AG04450 (cell line): ENCODE measurements at regions of chr1 and their contacts with region 1.

Region 1: GRCh38 chr1:207828485-207829158 is 76.8 kb downstream of the CD46 start:
- DNase-seq: peak; percentile 64
- H3K4me3 ChIP-seq: no peak overlapping the region
- H3K27ac ChIP-seq: no peak overlapping the region
- H3K27me3 ChIP-seq: no peaks in the 10 kb centered on the region
- CTCF ChIP-seq: peak; percentile 84

Region 2: DNA sequence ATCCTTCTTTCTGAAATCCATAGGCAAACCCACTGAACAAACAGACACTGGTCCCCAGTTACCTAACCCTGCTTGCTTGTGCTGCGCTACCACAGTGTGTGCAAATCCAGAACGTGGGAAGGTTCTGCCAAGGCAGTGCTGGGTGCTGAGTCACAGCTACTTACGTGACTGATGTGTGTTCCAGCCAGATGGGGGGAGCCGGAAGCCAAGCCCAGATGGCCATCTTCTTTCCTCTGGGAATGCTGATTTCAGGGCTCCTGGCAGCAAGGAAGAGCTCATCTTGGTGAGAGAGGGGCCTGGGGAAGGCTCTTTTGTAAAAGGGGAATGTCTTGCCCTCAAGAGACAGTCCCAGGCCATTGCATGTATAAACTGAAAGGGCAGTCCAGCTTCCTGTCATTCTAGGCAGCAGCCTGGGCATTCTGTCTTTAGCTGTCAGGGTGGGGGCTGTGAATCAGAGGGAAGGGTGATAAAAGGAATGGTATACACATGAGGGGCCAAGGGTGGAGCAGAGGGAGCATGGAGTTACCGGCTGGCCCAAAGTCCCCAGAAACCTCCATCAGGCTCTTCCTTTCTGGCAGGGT is 22.7 kb before region 1 on chr1:
- CTCF ChIA-PET with region 1: interaction called, 26 read pairs
- POLR2A ChIA-PET with region 1: interaction called, 5 read pairs
- DNase-seq: peak; percentile 85
- H3K4me3 ChIP-seq: no peak overlapping the region
- H3K27ac ChIP-seq: peak overlapping the region; percentile 71
- H3K27me3 ChIP-seq: no peaks in the 10 kb centered on the region
- CTCF ChIP-seq: no peak

Region 3: GRCh38 chr1:207811920-207812720 is 16.5 kb before region 1 on chr1:
- CTCF ChIA-PET with region 1: interaction called, 26 read pairs
- POLR2A ChIA-PET with region 1: interaction called, 3 read pairs
- DNase-seq: no peak
- H3K4me3 ChIP-seq: no peak overlapping the region
- H3K27ac ChIP-seq: no peak overlapping the region
- H3K27me3 ChIP-seq: no peaks in the 10 kb centered on the region
- CTCF ChIP-seq: peak; percentile 45

Region 4: DNA sequence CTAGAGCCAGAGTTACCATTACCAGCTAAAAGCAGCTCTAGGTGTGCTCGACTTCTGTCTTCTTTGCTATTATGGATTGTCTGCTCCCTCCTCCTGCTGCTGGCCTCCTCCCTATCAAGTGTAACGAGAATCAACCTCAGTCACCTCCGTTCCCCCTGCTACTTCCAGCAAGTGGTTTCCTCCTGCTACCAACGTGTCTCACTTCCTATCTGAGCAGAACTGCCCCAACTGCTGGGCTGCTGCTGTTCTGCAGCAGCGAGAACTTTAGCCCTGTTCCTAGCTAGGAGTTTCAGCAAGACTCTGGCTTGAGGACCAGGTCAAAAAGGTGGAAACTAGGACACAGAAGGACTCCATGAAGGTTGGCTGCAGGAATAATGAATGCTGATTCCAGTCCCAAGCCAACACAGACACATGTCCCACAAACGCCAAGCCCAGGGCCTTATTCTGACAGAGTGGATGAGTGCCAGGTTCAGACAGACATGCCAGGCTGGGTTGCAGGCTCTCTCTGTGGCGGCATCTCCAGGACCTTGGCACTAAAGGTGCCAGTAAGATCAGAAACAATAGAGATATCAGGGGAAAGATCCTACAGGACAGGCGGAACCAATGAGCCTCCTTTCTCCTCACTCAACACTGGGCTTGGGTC is 35.4 kb after region 1 on chr1:
- CTCF ChIA-PET with region 1: interaction called, 80 read pairs
- POLR2A ChIA-PET with region 1: interaction called, 12 read pairs
- DNase-seq: no peak
- H3K4me3 ChIP-seq: no peak overlapping the region
- H3K27ac ChIP-seq: no peak overlapping the region
- H3K27me3 ChIP-seq: no peaks in the 10 kb centered on the region
- CTCF ChIP-seq: no peak

Region 5: GRCh38 chr1:207868774-207869721 is 40.4 kb after region 1 on chr1:
- CTCF ChIA-PET with region 1: interaction called, 80 read pairs
- POLR2A ChIA-PET with region 1: interaction called, 8 read pairs
- DNase-seq: no peak
- H3K4me3 ChIP-seq: peak overlapping the region; percentile 71
- H3K27ac ChIP-seq: no peak overlapping the region
- H3K27me3 ChIP-seq: no peaks in the 10 kb centered on the region
- CTCF ChIP-seq: peak; percentile 65

Region 6: GRCh38 chr1:207876131-207876530 is 47.5 kb after region 1 on chr1:
- CTCF ChIA-PET with region 1: interaction called, 27 read pairs
- POLR2A ChIA-PET with region 1: no interaction called
- DNase-seq: no peak
- H3K4me3 ChIP-seq: no peak overlapping the region
- H3K27ac ChIP-seq: no peak overlapping the region
- H3K27me3 ChIP-seq: peaks cover 8% of the 10 kb centered on the region
- CTCF ChIP-seq: peak; percentile 32